Left lung (tissue), 14 donors: ENCODE measurements at regions of chr1 and their contacts with region 1.

Region 1: GRCh38 chr1:42774928-42775526 is 8.0 kb downstream of the C1orf50 start:
- DNase-seq: no peak
- ATAC-seq: no peak
- H3K4me3 ChIP-seq: no peak overlapping the region
- H3K27ac ChIP-seq: no peak overlapping the region
- H3K4me1 ChIP-seq: no peaks in the 10 kb centered on the region
- H3K27me3 ChIP-seq: no peaks in the 10 kb centered on the region
- CTCF ChIP-seq: no peak

Region 2: DNA sequence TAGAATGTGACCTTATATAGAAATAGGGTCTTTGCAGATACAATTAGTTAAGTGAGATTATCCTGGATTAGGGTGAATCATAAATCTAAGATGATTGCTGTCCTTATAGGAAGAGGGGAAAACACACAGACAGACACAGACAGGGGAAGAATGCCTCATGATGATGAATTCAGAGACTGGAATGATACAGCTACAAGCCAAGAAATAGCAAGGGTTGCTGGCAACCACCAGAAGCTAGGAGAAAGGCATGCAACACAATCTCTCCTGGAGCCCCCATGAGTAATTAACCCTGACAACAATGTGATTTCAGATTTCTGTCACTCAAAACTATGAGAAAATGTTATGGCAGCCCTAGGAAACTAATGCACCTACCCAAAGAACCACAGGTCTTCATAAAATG is 135.9 kb before region 1 on chr1:
- intact Hi-C with region 1: no loop called
- DNase-seq: no peak
- ATAC-seq: no peak
- H3K4me3 ChIP-seq: no peak overlapping the region
- H3K27ac ChIP-seq: no peak overlapping the region
- H3K4me1 ChIP-seq: no peaks in the 10 kb centered on the region
- H3K27me3 ChIP-seq: no peaks in the 10 kb centered on the region
- CTCF ChIP-seq: no peak

Region 3: GRCh38 chr1:42908046-42908445 is 133.0 kb after region 1 on chr1:
- intact Hi-C with region 1: loop called in 1 of 2 experiments (anchors 5 kb)
- DNase-seq: no peak
- ATAC-seq: no peak
- H3K4me3 ChIP-seq: no peak overlapping the region
- H3K27ac ChIP-seq: no peak overlapping the region
- H3K4me1 ChIP-seq: no peaks in the 10 kb centered on the region
- H3K27me3 ChIP-seq: no peaks in the 10 kb centered on the region
- CTCF ChIP-seq: no peak